ENCODE measurements at regions of chr15 and their contacts with region 1.

Region 1: DNA sequence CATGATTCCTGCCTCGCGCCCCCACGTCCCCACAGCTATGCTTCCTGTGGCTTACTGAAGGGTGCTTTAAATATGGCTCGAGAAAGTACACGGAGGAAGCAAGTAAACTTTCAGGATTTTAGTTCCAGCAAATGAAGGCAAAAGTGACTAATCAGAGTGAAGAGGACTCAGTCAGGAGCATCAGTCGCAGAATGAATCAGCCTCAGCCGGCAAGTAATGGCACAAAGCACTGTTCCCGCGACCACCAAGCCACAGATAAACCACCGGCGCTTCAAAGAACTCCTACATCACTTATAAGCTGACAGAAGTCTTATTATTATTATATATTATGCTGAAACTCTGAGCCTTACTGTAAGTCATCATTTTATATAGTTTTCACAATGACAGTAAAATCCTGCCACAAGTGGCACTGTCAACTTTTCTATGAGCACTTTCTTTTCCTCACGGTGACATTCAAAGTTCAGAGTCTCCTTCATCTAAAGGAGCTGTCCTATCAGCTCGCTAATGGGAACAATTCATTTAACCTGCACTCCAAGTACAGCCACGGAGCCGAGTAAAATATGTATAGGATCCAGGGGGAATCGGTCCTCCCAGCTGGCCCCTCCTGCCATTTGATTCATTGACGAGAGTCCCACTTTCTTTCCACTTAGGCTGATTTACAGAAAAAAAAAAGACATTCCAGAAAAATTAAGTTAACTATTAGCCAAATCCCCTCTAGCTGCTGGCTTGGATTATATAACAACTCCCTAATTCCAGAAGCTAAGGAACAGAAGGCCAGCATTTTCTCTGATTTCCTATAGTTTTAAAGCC is 217.0 kb upstream of the ICE2 start:
- DNase-seq: peak; percentile 48
- H3K4me3 Mint-ChIP-seq: peak overlapping the region; percentile 32
- H3K27ac Mint-ChIP-seq: peak overlapping the region; percentile 75
- H3K4me1 Mint-ChIP-seq: peaks cover 66% of the 10 kb centered on the region
- H3K27me3 Mint-ChIP-seq: no peaks in the 10 kb centered on the region

Region 2: GRCh38 chr15:60660290-60661051 is 35.4 kb before region 1 on chr15:
- intact Hi-C with region 1: loop called (anchors 1 kb)
- DNase-seq: no peak
- H3K4me3 Mint-ChIP-seq: no peak overlapping the region
- H3K27ac Mint-ChIP-seq: no peak overlapping the region
- H3K4me1 Mint-ChIP-seq: peaks cover 55% of the 10 kb centered on the region
- H3K27me3 Mint-ChIP-seq: peaks cover 3% of the 10 kb centered on the region

Region 3: DNA sequence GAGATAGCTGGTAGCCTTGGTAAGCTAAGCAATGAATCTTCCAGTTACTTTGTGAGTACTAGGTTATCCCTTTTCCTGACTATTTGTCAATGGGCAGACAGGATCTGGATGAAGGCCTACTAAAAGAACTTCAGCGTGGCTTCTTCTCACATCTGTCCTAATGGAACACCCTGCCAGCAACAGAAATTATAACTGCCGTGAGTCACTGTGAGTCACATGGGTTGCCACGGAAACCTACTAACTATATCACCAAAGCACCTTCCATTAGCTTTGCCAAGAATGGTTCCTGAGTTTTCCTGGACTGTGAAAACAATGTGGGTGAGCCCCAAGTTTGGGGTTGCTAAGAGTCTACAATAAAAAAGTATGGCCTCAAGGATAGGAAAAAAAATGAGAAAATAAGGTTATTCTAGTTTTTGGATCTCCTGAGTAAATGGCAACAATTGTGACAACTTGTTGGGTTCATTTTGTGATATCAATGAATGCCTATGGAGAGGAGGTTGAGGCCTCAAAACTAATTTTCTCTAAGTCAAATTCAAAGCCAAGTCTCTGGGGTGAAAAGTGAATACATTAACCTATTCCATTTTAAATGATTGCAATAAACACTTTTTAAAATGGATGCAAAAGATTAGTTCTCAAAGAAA is 21.9 kb before region 1 on chr15:
- intact Hi-C with region 1: loop called (anchors 1 kb)
- DNase-seq: no peak
- H3K4me3 Mint-ChIP-seq: no peak overlapping the region
- H3K27ac Mint-ChIP-seq: peak overlapping the region; percentile 16
- H3K4me1 Mint-ChIP-seq: peaks cover 22% of the 10 kb centered on the region
- H3K27me3 Mint-ChIP-seq: peaks cover 2% of the 10 kb centered on the region

Region 4: DNA sequence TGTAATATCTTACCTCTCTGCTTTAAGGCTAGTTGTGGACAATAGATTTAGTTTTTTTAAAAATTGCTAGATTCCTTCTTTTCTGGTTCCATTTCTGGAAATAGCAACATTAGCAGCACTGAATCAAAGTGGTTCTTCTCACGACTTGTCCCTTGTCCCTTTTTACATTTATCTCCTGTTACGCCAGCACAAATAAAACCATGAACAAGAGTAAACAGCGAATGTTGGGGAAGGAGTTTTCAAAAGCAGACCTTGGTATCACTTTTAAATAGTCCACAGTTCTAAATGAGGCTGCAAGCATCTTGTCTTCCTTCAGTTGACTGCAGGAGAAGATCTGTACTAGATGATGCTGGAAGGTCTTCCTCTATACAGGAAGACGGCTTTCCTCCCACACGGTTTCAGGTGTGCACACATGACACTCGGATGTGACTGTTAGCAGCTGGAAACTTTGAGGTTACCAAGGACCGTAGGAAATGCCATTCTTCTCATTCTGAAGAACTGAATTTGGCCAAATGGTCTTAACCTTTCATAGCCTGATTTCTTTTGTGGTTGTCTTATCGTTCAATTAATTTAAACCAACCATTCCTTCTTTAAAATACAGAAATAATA is 34.0 kb after region 1 on chr15:
- intact Hi-C with region 1: loop called (anchors 5 kb)
- DNase-seq: peak; percentile 24
- H3K4me3 Mint-ChIP-seq: peak overlapping the region; percentile 72
- H3K27ac Mint-ChIP-seq: peak overlapping the region; percentile 85
- H3K4me1 Mint-ChIP-seq: peaks cover 72% of the 10 kb centered on the region
- H3K27me3 Mint-ChIP-seq: no peaks in the 10 kb centered on the region

Region 5: GRCh38 chr15:60840306-60840702 is 144.4 kb after region 1 on chr15:
- intact Hi-C with region 1: loop called (anchors 1 kb)
- DNase-seq: no peak
- H3K4me3 Mint-ChIP-seq: peak overlapping the region; percentile 49
- H3K27ac Mint-ChIP-seq: peak overlapping the region; percentile 37
- H3K4me1 Mint-ChIP-seq: peaks cover 66% of the 10 kb centered on the region
- H3K27me3 Mint-ChIP-seq: peaks cover 17% of the 10 kb centered on the region

Region 6: DNA sequence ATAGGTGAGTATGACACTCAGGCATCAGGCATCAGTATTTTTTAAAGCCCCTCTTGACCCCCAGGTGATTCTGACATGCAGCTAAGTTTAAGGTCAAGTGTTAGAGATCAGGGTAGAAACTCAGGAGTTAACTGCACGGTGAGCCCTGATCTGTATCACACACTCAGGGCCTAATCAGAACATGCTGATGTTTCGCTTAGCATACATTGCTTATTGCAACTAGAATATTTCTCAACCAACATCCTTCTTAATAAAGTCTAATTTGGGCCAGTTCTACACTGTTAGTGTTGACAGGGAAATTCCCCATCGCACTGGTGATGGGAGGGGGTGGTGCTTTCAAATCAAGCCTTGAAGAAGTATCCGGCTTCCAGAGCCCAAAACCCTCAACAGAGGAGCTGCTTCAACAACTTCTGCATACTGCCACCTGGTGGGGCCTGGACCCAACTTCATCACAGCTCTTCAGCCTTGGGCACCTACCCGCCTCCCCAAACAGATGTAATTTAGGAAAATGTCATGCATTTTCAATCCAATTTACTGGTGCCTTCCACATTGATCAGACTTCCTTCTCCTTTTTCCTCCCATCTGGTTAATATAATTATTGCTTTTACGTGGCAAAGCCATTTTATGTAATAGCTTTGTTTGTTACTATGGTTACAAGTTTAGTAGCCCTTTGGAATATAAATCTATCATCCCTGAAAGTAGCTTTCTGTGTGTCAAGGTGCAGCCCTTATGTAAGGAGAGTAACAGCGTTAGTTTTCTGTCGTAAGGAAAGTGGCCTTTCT is 221.0 kb after region 1 on chr15:
- intact Hi-C with region 1: loop called (anchors 1 kb)
- DNase-seq: peak; percentile 80
- H3K4me3 Mint-ChIP-seq: peak overlapping the region; percentile 17
- H3K27ac Mint-ChIP-seq: peak overlapping the region; percentile 64
- H3K4me1 Mint-ChIP-seq: peaks cover 32% of the 10 kb centered on the region
- H3K27me3 Mint-ChIP-seq: peaks cover 2% of the 10 kb centered on the region

Measured in activated T-helper 1 cell treated with anti-CD3 and anti-CD28 coated beads, Interleukin-12 subunit alpha, Interleukin-12 subunit beta, Interleukin-2, Interleukin-4 antibody, amounts not matched to agents 30 ng/mL and 10 ng/mL and 1 ng/mL, durations not matched to agents 14 hours and 24 hours and 36 hours (primary cell).